AG04450 (cell line): ENCODE measurements at regions of chr14 and their contacts with region 1.

Region 1: GRCh38 chr14:77457522-77458290 is at the starts of genes AHSA1 and VIPAS39:
- DNase-seq: peak; percentile 98
- H3K4me3 ChIP-seq: peak within 1 kb of the TSS; percentile 99
- H3K27ac ChIP-seq: peak within 1 kb of the TSS; percentile 93
- H3K27me3 ChIP-seq: no peaks in the 10 kb centered on the region
- CTCF ChIP-seq: no peak
- polyA plus RNA-seq, gene AHSA1: 121 and 145 TPM in 2 replicates
- polyA plus RNA-seq, gene VIPAS39: 35.1 and 42.2 TPM in 2 replicates

Region 2: GRCh38 chr14:77335576-77335975 is 122.1 kb before region 1 on chr14:
- CTCF ChIA-PET with region 1: no interaction called
- POLR2A ChIA-PET with region 1: no interaction called
- DNase-seq: no peak
- H3K4me3 ChIP-seq: no peak overlapping the region
- H3K27ac ChIP-seq: no peak overlapping the region
- H3K27me3 ChIP-seq: no peaks in the 10 kb centered on the region
- CTCF ChIP-seq: no peak

Region 3: GRCh38 chr14:77442196-77442595 is 15.5 kb before region 1 on chr14:
- CTCF ChIA-PET with region 1: interaction called, 11 read pairs
- POLR2A ChIA-PET with region 1: no interaction called
- DNase-seq: no peak
- H3K4me3 ChIP-seq: no peak overlapping the region
- H3K27ac ChIP-seq: no peak overlapping the region
- H3K27me3 ChIP-seq: no peaks in the 10 kb centered on the region
- CTCF ChIP-seq: no peak

Region 4: GRCh38 chr14:77478796-77479195 is 21.1 kb after region 1 on chr14:
- CTCF ChIA-PET with region 1: interaction called, 10 read pairs
- POLR2A ChIA-PET with region 1: no interaction called
- DNase-seq: no peak
- H3K4me3 ChIP-seq: no peak overlapping the region
- H3K27ac ChIP-seq: no peak overlapping the region
- H3K27me3 ChIP-seq: peaks cover 25% of the 10 kb centered on the region
- CTCF ChIP-seq: no peak

Region 5: GRCh38 chr14:77554207-77554606 is 96.5 kb after region 1 on chr14:
- CTCF ChIA-PET with region 1: interaction called, 84 read pairs
- POLR2A ChIA-PET with region 1: no interaction called
- DNase-seq: no peak
- H3K4me3 ChIP-seq: no peak overlapping the region
- H3K27ac ChIP-seq: no peak overlapping the region
- H3K27me3 ChIP-seq: no peaks in the 10 kb centered on the region
- CTCF ChIP-seq: no peak

Region 6: DNA sequence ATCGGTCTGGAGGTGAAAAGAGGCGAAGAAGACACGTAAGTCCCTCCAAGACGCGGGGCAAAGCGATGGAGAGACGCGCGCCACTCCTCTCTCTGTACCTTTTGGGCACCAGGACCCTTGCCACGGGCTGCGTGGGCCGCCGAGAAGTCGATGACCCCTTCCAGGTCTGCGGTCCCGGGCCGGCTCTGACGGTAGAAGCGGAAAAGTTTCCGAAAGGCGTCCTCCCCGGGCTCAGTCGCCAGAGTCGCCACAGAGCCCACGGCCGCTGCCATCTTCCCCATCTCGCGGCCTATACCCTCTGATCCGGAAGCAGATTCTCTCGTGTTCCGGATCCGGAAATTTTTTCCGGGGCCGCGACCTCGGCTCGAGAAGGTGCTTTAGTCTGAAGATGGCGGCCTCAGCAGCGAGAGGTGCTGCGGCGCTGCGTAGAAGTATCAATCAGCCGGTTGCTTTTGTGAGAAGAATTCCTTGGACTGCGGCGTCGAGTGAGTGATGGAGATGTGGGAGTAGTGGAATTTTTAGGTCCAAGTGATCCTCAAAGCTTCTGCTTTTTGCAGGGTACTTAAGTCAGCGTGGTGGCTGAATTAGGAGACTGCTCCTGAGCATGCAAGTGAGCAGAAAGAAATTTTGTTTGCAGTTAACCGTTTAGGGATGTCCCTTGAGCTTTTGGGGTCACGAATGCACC is 250.2 kb after region 1 on chr14 and contains the starts of genes ALKBH1 and SLIRP:
- CTCF ChIA-PET with region 1: interaction called, 26 read pairs
- POLR2A ChIA-PET with region 1: interaction called, 6 read pairs
- DNase-seq: peak; percentile 36
- H3K4me3 ChIP-seq: peak within 1 kb of the TSS; percentile 94
- H3K27ac ChIP-seq: peak within 1 kb of the TSS; percentile 49
- H3K27me3 ChIP-seq: no peaks in the 10 kb centered on the region
- CTCF ChIP-seq: no peak
- polyA plus RNA-seq, gene ALKBH1: 12.7 and 14.0 TPM in 2 replicates
- polyA plus RNA-seq, gene SLIRP: 244 and 308 TPM in 2 replicates